Naive thymus-derived CD4-positive, alpha-beta T cell (primary cell): ENCODE measurements at regions of chr1 and their contacts with region 1.

Region 1: GRCh38 chr1:165697881-165698760 is at the start of gene ALDH9A1:
- DNase-seq: peak; percentile 73 to 89 (median 89)
- ATAC-seq: peak; percentile 93
- H3K4me3 ChIP-seq: peak within 1 kb of the TSS; percentile 96
- H3K4me3 Mint-ChIP-seq: peak within 1 kb of the TSS; percentile 95 to 100 (median 99)
- H3K27ac ChIP-seq: peak within 1 kb of the TSS; percentile 91
- H3K27ac Mint-ChIP-seq: peak within 1 kb of the TSS; percentile 95 to 99 (median 98)
- H3K4me1 ChIP-seq: peaks cover 14 to 18% of the 10 kb centered on the region in 2 donors
- H3K4me1 Mint-ChIP-seq: peaks cover 15 to 42% (median 35%) of the 10 kb centered on the region in 7 donors
- H3K27me3 ChIP-seq: no peaks in the 10 kb centered on the region
- H3K27me3 Mint-ChIP-seq: peaks cover 0 to 2% (median 0%) of the 10 kb centered on the region in 5 donors
- total RNA-seq, gene ALDH9A1: 25.0 to 46.0 (median 40.5) TPM

Region 2: DNA sequence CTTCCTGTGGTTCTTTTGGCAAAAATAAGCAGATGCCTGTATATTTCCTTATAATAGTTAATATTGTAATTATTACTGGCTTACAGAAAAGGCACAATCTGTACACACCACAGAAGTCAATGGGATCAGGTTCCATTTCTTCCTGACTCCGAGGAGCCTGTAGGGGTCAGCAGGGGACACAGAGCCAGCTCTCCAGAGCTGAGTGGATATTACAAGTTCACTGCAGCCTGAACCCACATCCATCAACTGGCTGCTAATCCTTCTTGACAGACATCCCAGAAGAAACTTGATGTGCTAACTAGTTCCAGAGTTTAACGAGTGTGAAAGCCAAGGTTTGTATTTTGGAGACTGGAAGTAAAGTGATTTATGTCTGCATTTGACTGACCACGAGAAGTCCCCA is 545.4 kb before region 1 on chr1:
- CTCF ChIA-PET with region 1: no interaction called
- POLR2A ChIA-PET with region 1: no interaction called
- intact Hi-C with region 1: no loop called
- DNase-seq: no peak
- ATAC-seq: no peak
- H3K4me3 ChIP-seq: no peak overlapping the region
- H3K4me3 Mint-ChIP-seq: no peak overlapping the region
- H3K27ac ChIP-seq: no peak overlapping the region
- H3K27ac Mint-ChIP-seq: peak overlapping the region in 1 of 9 donors; percentile 49
- H3K4me1 ChIP-seq: no peaks in the 10 kb centered on the region
- H3K4me1 Mint-ChIP-seq: no peaks in the 10 kb centered on the region
- H3K27me3 ChIP-seq: no peaks in the 10 kb centered on the region
- H3K27me3 Mint-ChIP-seq: peaks cover 0 to 7% (median 0%) of the 10 kb centered on the region in 5 donors

Region 3: GRCh38 chr1:165679282-165680036 is 18.7 kb before region 1 on chr1:
- CTCF ChIA-PET with region 1: interaction called, 3 read pairs
- POLR2A ChIA-PET with region 1: interaction called, 3 read pairs
- intact Hi-C with region 1: loop called in 1 of 2 experiments (anchors 2 kb)
- DNase-seq: no peak
- ATAC-seq: no peak
- H3K4me3 ChIP-seq: no peak overlapping the region
- H3K4me3 Mint-ChIP-seq: no peak overlapping the region
- H3K27ac ChIP-seq: no peak overlapping the region
- H3K27ac Mint-ChIP-seq: peak overlapping the region in 8 of 9 donors; percentile 13 to 87 (median 76)
- H3K4me1 ChIP-seq: peaks cover 0 to 8% of the 10 kb centered on the region in 2 donors
- H3K4me1 Mint-ChIP-seq: peaks cover 13 to 43% (median 39%) of the 10 kb centered on the region in 7 donors
- H3K27me3 ChIP-seq: no peaks in the 10 kb centered on the region
- H3K27me3 Mint-ChIP-seq: no peaks in the 10 kb centered on the region

Region 4: GRCh38 chr1:165768513-165769394 is 70.6 kb after region 1 on chr1 and contains the start of gene TMCO1:
- CTCF ChIA-PET with region 1: interaction called, 4 read pairs
- POLR2A ChIA-PET with region 1: interaction called, 19 read pairs
- intact Hi-C with region 1: loop called (anchors 1 kb)
- DNase-seq: peak; percentile 76 to 97 (median 94)
- ATAC-seq: peak; percentile 98
- H3K4me3 ChIP-seq: peak within 1 kb of the TSS; percentile 94
- H3K4me3 Mint-ChIP-seq: peak within 1 kb of the TSS; percentile 90 to 100 (median 97)
- H3K27ac ChIP-seq: peak within 1 kb of the TSS; percentile 85
- H3K27ac Mint-ChIP-seq: peak within 1 kb of the TSS; percentile 91 to 100 (median 98)
- H3K4me1 ChIP-seq: peaks cover 19 to 32% of the 10 kb centered on the region in 2 donors
- H3K4me1 Mint-ChIP-seq: peaks cover 44 to 83% (median 68%) of the 10 kb centered on the region in 7 donors
- H3K27me3 ChIP-seq: no peaks in the 10 kb centered on the region
- H3K27me3 Mint-ChIP-seq: no peaks in the 10 kb centered on the region
- total RNA-seq, gene TMCO1: 30.4 to 97.1 (median 49.8) TPM

Region 5: DNA sequence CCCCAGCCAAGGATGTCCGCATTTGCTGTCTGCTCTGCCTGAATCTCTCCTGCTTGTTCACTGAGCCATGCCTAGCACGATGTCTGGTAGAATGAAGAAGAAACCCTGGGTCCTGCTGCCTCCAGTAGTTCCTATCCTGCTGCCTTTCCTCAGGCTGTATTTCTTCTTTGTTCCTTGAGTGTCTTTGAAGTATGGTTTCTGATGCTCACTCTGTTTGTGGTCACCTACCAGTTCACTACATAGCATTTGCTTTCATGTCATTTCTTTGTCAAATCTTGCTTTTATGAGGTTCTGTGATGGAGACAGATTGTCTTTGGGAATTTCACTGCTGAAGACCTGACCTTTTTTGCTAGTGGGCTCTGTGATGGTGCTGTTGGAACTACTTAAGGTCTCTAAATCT is 135.2 kb after region 1 on chr1:
- CTCF ChIA-PET with region 1: no interaction called
- POLR2A ChIA-PET with region 1: no interaction called
- intact Hi-C with region 1: loop called in 1 of 2 experiments (anchors 1 kb)
- DNase-seq: no peak
- ATAC-seq: no peak
- H3K4me3 ChIP-seq: no peak overlapping the region
- H3K4me3 Mint-ChIP-seq: no peak overlapping the region
- H3K27ac ChIP-seq: no peak overlapping the region
- H3K27ac Mint-ChIP-seq: no peak overlapping the region
- H3K4me1 ChIP-seq: peaks cover 3 to 7% of the 10 kb centered on the region in 2 donors
- H3K4me1 Mint-ChIP-seq: peaks cover 5 to 41% (median 12%) of the 10 kb centered on the region in 7 donors
- H3K27me3 ChIP-seq: no peaks in the 10 kb centered on the region
- H3K27me3 Mint-ChIP-seq: no peaks in the 10 kb centered on the region